PC-3 (cell line): ENCODE measurements at regions of chr19 and their contacts with region 1.

Region 1: GRCh38 chr19:29811125-29812079 is at the start of gene CCNE1:
- DNase-seq: peak; percentile 77
- ATAC-seq: peak; percentile 92
- H3K4me3 ChIP-seq: peak within 1 kb of the TSS; percentile 67
- H3K27ac ChIP-seq: no peak within 1 kb of the TSS
- H3K4me1 ChIP-seq: peaks cover 5% of the 10 kb centered on the region; the same call in 1 of the 2 replicates
- H3K27me3 ChIP-seq: no peaks in the 10 kb centered on the region
- CTCF ChIP-seq: no peak
- total RNA-seq, gene CCNE1: 10.0 and 10.9 TPM in 2 replicates

Region 2: GRCh38 chr19:29844891-29845572 is 33.6 kb after region 1 on chr19:
- CTCF ChIA-PET with region 1: interaction called, 5 read pairs
- POLR2A ChIA-PET with region 1: no interaction called
- intact Hi-C with region 1: loop called (anchors 1 kb)
- DNase-seq: peak; percentile 81
- ATAC-seq: peak; percentile 80
- H3K4me3 ChIP-seq: peak overlapping the region; percentile 76
- H3K27ac ChIP-seq: peak overlapping the region; percentile 46
- H3K4me1 ChIP-seq: peaks cover 13% of the 10 kb centered on the region; the same call in 1 of the 2 replicates
- H3K27me3 ChIP-seq: no peaks in the 10 kb centered on the region
- CTCF ChIP-seq: no peak